MCF 10A (cell line): ENCODE measurements at regions of chr20 and their contacts with region 1.

Region 1: GRCh38 chr20:57329608-57330221 is at the start of gene SPO11:
- DNase-seq: no peak
- H3K4me3 Mint-ChIP-seq: no peak within 1 kb of the TSS
- H3K27ac Mint-ChIP-seq: no peak within 1 kb of the TSS
- H3K4me1 Mint-ChIP-seq: peaks cover 7% of the 10 kb centered on the region
- H3K27me3 Mint-ChIP-seq: peaks cover 18% of the 10 kb centered on the region
- CTCF ChIP-seq: peak; percentile 17
- total RNA-seq, gene SPO11: not detected in 2 replicates

Region 2: GRCh38 chr20:57089691-57090150 is 240.0 kb before region 1 on chr20:
- CTCF ChIA-PET with region 1: interaction called, 426 read pairs
- POLR2A ChIA-PET with region 1: interaction called, 16 read pairs
- intact Hi-C with region 1: loop called (anchors 1 kb)
- DNase-seq: peak; percentile 69
- H3K4me3 Mint-ChIP-seq: no peak overlapping the region
- H3K27ac Mint-ChIP-seq: no peak overlapping the region
- H3K4me1 Mint-ChIP-seq: peaks cover 7% of the 10 kb centered on the region
- H3K27me3 Mint-ChIP-seq: peaks cover 16% of the 10 kb centered on the region
- CTCF ChIP-seq: peak; percentile 98

Region 3: GRCh38 chr20:57114290-57115005 is 215.3 kb before region 1 on chr20:
- CTCF ChIA-PET with region 1: interaction called, 13 read pairs
- POLR2A ChIA-PET with region 1: interaction called, 3 read pairs
- intact Hi-C with region 1: no loop called
- DNase-seq: no peak
- H3K4me3 Mint-ChIP-seq: no peak overlapping the region
- H3K27ac Mint-ChIP-seq: no peak overlapping the region
- H3K4me1 Mint-ChIP-seq: no peaks in the 10 kb centered on the region
- H3K27me3 Mint-ChIP-seq: peaks cover 16% of the 10 kb centered on the region
- CTCF ChIP-seq: no peak

Region 4: GRCh38 chr20:57180406-57181353 is 149.0 kb before region 1 on chr20:
- CTCF ChIA-PET with region 1: interaction called, 16 read pairs
- POLR2A ChIA-PET with region 1: interaction called, 7 read pairs
- intact Hi-C with region 1: no loop called
- DNase-seq: no peak
- H3K4me3 Mint-ChIP-seq: no peak overlapping the region
- H3K27ac Mint-ChIP-seq: no peak overlapping the region
- H3K4me1 Mint-ChIP-seq: peaks cover 2% of the 10 kb centered on the region
- H3K27me3 Mint-ChIP-seq: no peaks in the 10 kb centered on the region
- CTCF ChIP-seq: no peak

Region 5: GRCh38 chr20:57211959-57212895 is 117.5 kb before region 1 on chr20:
- CTCF ChIA-PET with region 1: interaction called, 12 read pairs
- POLR2A ChIA-PET with region 1: interaction called, 7 read pairs
- intact Hi-C with region 1: no loop called
- DNase-seq: peak; percentile 88
- H3K4me3 Mint-ChIP-seq: no peak overlapping the region
- H3K27ac Mint-ChIP-seq: no peak overlapping the region
- H3K4me1 Mint-ChIP-seq: peaks cover 13% of the 10 kb centered on the region
- H3K27me3 Mint-ChIP-seq: peaks cover 15% of the 10 kb centered on the region
- CTCF ChIP-seq: no peak

Region 6: GRCh38 chr20:57252559-57253162 is 77.1 kb before region 1 on chr20:
- CTCF ChIA-PET with region 1: interaction called, 16 read pairs
- POLR2A ChIA-PET with region 1: interaction called, 4 read pairs
- intact Hi-C with region 1: no loop called
- DNase-seq: no peak
- H3K4me3 Mint-ChIP-seq: no peak overlapping the region
- H3K27ac Mint-ChIP-seq: no peak overlapping the region
- H3K4me1 Mint-ChIP-seq: no peaks in the 10 kb centered on the region
- H3K27me3 Mint-ChIP-seq: peaks cover 15% of the 10 kb centered on the region
- CTCF ChIP-seq: no peak

Region 7: GRCh38 chr20:57351042-57351783 is 21.5 kb after region 1 on chr20 and contains the start of gene RAE1:
- CTCF ChIA-PET with region 1: interaction called, 216 read pairs
- POLR2A ChIA-PET with region 1: interaction called, 16 read pairs
- intact Hi-C with region 1: no loop called
- DNase-seq: peak; percentile 87
- H3K4me3 Mint-ChIP-seq: peak within 1 kb of the TSS; percentile 80
- H3K27ac Mint-ChIP-seq: peak within 1 kb of the TSS; percentile 81
- H3K4me1 Mint-ChIP-seq: peaks cover 15% of the 10 kb centered on the region
- H3K27me3 Mint-ChIP-seq: no peaks in the 10 kb centered on the region
- CTCF ChIP-seq: no peak
- total RNA-seq, gene RAE1: 46.7 and 60.3 TPM in 2 replicates